ENCODE measurements at regions of chr9 and their contacts with region 1.

Region 1: GRCh38 chr9:37592108-37592951 is at the start of gene TOMM5:
- DNase-seq: peak; percentile 81

Region 2: GRCh38 chr9:37485389-37486219 is 106.7 kb before region 1 on chr9 and contains the start of gene POLR1E:
- CTCF ChIA-PET with region 1: no interaction called
- POLR2A ChIA-PET with region 1: interaction called, 16 read pairs
- DNase-seq: peak; percentile 99

Region 3: DNA sequence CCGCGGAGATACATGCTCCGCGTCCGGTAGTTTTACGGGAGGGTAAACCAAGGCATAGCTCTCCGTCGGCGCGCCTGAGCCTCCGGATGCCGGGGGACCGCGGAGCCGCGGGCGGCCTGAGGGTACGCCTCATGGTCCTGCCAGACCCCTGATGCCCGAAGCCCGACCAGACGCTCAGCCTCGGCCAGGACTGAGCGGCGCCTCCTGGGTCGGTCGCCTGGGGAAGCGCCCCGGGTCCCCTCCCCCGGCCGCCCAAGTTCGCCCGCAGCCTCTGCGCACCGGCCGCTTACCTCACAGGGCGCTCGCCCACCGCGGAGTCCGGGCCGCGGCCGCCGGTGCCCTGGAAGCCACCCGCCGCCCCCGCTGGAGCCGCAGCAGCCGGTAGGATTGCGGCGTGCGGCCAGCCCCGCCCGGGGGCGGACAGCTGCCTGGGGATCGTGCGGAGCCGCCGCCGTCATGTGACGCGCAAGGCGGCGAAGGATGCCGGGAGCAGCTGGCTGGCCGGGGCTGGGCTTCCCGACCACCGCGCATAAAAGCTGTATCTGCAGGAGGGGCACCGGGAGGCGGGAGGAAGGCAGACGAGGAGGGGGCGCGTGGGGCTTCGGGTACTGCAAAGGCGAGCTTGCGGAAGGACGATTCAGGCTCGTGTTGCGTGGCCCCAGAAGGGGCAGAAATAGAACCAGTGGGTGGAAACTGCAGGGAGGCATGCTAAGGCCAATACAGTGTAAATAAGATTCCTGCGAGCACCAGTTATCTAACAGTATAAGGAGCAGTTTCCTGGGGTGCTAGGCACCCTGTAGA is 16.2 kb before region 1 on chr9 and contains the start of gene FBXO10:
- CTCF ChIA-PET with region 1: interaction called, 3 read pairs
- POLR2A ChIA-PET with region 1: interaction called, 14 read pairs
- DNase-seq: peak; percentile 77

Region 4: GRCh38 chr9:37913480-37914153 is 321.3 kb after region 1 on chr9:
- CTCF ChIA-PET with region 1: no interaction called
- POLR2A ChIA-PET with region 1: no interaction called
- DNase-seq: peak; percentile 82